GM13977 (cell line): ENCODE measurements at regions of chr7 and their contacts with region 1.

Region 1: GRCh38 chr7:127413962-127414361 is 21.5 kb upstream of the ZNF800 start:
- DNase-seq: no peak
- CTCF ChIP-seq: no peak

Region 2: DNA sequence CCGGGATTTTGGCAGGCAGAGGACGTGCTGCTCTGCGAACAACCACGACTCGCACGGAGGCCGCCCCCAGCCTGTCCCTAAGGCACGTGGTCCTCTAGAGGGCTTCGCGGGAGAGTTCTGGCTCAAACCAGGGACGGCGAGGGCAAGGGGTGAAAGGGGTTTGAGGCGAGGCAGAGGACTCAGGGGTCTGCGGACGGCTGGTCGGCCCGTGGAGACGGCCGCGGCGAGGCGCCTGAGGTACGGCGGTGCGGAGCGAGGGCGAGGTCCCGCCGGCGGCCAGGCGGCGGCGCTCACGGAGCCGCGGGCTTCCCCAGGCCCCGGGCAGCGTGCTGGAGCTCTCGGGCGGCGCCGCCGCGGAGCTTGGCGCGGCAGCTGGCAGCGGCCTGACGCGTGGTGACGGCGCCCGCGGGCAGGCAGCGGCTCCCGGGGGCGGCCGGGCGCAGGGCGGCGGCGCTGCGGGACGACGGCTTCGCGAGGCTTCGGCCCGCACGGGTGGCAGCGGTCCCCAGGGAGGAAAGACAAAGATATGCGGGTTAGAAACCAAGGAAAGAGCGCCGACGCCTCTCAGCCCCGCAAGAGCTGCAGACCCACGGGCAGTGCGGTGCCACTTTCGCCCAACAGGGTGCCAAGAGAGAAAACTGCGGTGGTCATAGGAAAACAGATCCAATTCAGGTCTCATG is 66.3 kb before region 1 on chr7:
- in situ Hi-C with region 1: loop called (anchors 5 kb)
- DNase-seq: peak; percentile 87
- CTCF ChIP-seq: peak; percentile 91